ENCODE measurements at regions of chr17 and their contacts with region 1.

Region 1: GRCh38 chr17:45021607-45022287 is 29.7 kb downstream of the DCAKD start:
- DNase-seq: peak; percentile 61
- H3K4me3 Mint-ChIP-seq: no peak overlapping the region
- H3K27ac Mint-ChIP-seq: no peak overlapping the region
- H3K4me1 Mint-ChIP-seq: peaks cover 16% of the 10 kb centered on the region
- H3K27me3 Mint-ChIP-seq: peaks cover 34% of the 10 kb centered on the region

Region 2: DNA sequence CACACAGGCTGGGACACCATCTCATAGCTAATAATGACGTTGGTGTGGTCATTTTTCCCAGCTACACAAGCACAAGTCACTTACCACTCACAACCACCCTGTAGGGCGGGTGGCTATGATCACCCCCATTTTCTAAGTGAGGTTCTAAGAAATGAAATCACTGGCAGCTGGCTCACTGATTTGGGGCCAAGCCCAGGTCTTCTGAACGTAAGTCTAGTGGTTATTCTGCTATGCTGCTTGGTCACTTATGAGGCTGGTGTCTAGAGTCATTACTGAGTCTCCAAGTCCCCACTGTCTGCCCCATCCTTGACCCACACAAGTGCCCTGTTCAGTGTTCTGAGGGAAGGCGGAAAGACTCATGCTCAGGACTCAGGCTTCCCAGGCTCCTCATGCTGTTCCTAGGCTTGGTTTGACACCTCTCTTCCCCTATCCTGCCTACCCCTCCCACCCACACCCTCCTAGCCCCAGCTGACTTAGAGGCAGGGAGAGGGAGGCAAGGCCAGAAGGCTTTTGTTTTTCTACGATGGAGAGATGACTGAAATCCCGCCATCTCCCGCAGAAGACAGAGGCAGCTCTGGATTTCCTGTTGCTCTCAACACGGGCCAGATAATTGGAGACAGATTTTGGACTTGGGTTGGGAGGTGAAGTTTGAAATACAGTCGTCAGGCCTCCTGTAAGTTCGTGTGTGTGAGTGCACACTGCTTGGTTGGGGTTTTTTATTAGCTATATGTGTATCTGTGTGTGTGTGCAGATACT is 432.3 kb before region 1 on chr17:
- CTCF ChIA-PET with region 1: no interaction called
- intact Hi-C with region 1: no loop called
- DNase-seq: no peak
- H3K4me3 Mint-ChIP-seq: no peak overlapping the region
- H3K27ac Mint-ChIP-seq: no peak overlapping the region
- H3K4me1 Mint-ChIP-seq: no peaks in the 10 kb centered on the region
- H3K27me3 Mint-ChIP-seq: peaks cover 5% of the 10 kb centered on the region

Region 3: GRCh38 chr17:44899069-44899782 is 122.5 kb before region 1 on chr17 and contains the start of gene EFTUD2:
- CTCF ChIA-PET with region 1: interaction called, 6 read pairs
- intact Hi-C with region 1: loop called (anchors 5 kb)
- DNase-seq: peak; percentile 94
- H3K4me3 Mint-ChIP-seq: peak within 1 kb of the TSS; percentile 90
- H3K27ac Mint-ChIP-seq: peak within 1 kb of the TSS; percentile 97
- H3K4me1 Mint-ChIP-seq: peaks cover 25% of the 10 kb centered on the region
- H3K27me3 Mint-ChIP-seq: peaks cover 2% of the 10 kb centered on the region
- total RNA-seq, gene EFTUD2: 170 to 176 TPM

Region 4: GRCh38 chr17:44911133-44912001 is 110.4 kb before region 1 on chr17:
- CTCF ChIA-PET with region 1: interaction called, 32 read pairs
- intact Hi-C with region 1: no loop called
- DNase-seq: peak; percentile 69
- H3K4me3 Mint-ChIP-seq: no peak overlapping the region
- H3K27ac Mint-ChIP-seq: no peak overlapping the region
- H3K4me1 Mint-ChIP-seq: peaks cover 3% of the 10 kb centered on the region
- H3K27me3 Mint-ChIP-seq: peaks cover 25% of the 10 kb centered on the region

Region 5: GRCh38 chr17:44919885-44920564 is 101.7 kb before region 1 on chr17:
- CTCF ChIA-PET with region 1: interaction called, 60 read pairs
- intact Hi-C with region 1: loop called (anchors 1 kb)
- DNase-seq: peak; percentile 84
- H3K4me3 Mint-ChIP-seq: no peak overlapping the region
- H3K27ac Mint-ChIP-seq: no peak overlapping the region
- H3K4me1 Mint-ChIP-seq: no peaks in the 10 kb centered on the region
- H3K27me3 Mint-ChIP-seq: peaks cover 18% of the 10 kb centered on the region

Region 6: GRCh38 chr17:44947461-44948314 is 74.1 kb before region 1 on chr17 and contains the start of gene KIF18B:
- CTCF ChIA-PET with region 1: interaction called, 4 read pairs
- intact Hi-C with region 1: loop called (anchors 1 kb)
- DNase-seq: peak; percentile 97
- H3K4me3 Mint-ChIP-seq: peak within 1 kb of the TSS; percentile 84
- H3K27ac Mint-ChIP-seq: peak within 1 kb of the TSS; percentile 74
- H3K4me1 Mint-ChIP-seq: peaks cover 7% of the 10 kb centered on the region
- H3K27me3 Mint-ChIP-seq: peaks cover 5% of the 10 kb centered on the region
- total RNA-seq, gene KIF18B: 54.9 to 55.4 TPM

Region 7: GRCh38 chr17:45098869-45099616 is 77.3 kb after region 1 on chr17:
- CTCF ChIA-PET with region 1: interaction called, 9 read pairs
- intact Hi-C with region 1: loop called (anchors 2 kb)
- DNase-seq: peak; percentile 89
- H3K4me3 Mint-ChIP-seq: no peak overlapping the region
- H3K27ac Mint-ChIP-seq: no peak overlapping the region
- H3K4me1 Mint-ChIP-seq: no peaks in the 10 kb centered on the region
- H3K27me3 Mint-ChIP-seq: no peaks in the 10 kb centered on the region

Region 8: GRCh38 chr17:45410144-45411091 is 388.7 kb after region 1 on chr17:
- CTCF ChIA-PET with region 1: no interaction called
- intact Hi-C with region 1: no loop called
- DNase-seq: peak; percentile 80
- H3K4me3 Mint-ChIP-seq: peak overlapping the region; percentile 99
- H3K27ac Mint-ChIP-seq: peak overlapping the region; percentile 100
- H3K4me1 Mint-ChIP-seq: peaks cover 49% of the 10 kb centered on the region
- H3K27me3 Mint-ChIP-seq: no peaks in the 10 kb centered on the region